Common myeloid progenitor, CD34-positive (primary cell): ENCODE measurements at regions of chr12 and their contacts with region 1.

Region 1: DNA sequence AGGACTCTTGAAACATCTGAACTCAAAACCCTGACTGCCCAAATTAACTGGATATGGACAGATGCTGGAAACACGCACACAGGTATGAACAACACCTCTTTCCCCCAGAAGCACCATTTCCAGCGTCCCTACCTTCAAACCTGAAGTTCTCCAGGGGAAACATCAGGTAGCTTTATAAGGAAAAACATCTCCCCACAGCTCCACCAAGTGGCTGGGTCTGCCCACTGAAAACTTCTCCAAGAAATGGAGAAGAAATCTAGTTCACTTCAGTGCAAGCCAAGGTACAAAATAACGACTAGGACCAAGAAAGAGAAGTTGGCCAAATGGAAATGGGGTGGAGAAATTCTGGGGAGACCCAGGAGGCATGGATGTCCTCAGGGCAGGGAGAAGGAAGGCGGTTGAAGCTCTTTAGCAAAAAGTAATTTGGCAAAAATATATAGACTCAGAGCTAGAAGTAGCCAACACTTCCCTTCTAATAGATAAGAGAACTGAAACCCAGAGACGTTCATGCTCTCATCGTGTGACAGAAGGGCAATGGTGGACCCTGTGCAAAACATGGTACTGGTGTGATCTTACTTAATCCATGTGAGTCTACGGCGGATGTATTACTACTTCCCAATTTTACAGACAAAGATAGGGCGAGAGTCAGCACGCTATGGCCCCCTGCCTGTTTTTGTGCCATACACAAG is 10.5 kb upstream of the NUAK1 start:
- DNase-seq: peak in 2 of 3 donors; percentile 22 to 36
- H3K4me3 ChIP-seq: no peak overlapping the region
- H3K27ac ChIP-seq: no peak overlapping the region
- H3K4me1 ChIP-seq: no peaks in the 10 kb centered on the region
- H3K27me3 ChIP-seq: peaks cover 0 to 36% (median 4%) of the 10 kb centered on the region in 5 experiments

Region 2: GRCh38 chr12:105420659-105421240 is 728.5 kb before region 1 on chr12:
- CTCF ChIA-PET with region 1: interaction called, 28 read pairs
- POLR2A ChIA-PET with region 1: no interaction called
- DNase-seq: peak; percentile 58 to 79 (median 71)
- H3K4me3 ChIP-seq: no peak overlapping the region
- H3K27ac ChIP-seq: no peak overlapping the region
- H3K4me1 ChIP-seq: no peaks in the 10 kb centered on the region
- H3K27me3 ChIP-seq: peaks cover 0 to 13% (median 3%) of the 10 kb centered on the region in 5 experiments

Region 3: DNA sequence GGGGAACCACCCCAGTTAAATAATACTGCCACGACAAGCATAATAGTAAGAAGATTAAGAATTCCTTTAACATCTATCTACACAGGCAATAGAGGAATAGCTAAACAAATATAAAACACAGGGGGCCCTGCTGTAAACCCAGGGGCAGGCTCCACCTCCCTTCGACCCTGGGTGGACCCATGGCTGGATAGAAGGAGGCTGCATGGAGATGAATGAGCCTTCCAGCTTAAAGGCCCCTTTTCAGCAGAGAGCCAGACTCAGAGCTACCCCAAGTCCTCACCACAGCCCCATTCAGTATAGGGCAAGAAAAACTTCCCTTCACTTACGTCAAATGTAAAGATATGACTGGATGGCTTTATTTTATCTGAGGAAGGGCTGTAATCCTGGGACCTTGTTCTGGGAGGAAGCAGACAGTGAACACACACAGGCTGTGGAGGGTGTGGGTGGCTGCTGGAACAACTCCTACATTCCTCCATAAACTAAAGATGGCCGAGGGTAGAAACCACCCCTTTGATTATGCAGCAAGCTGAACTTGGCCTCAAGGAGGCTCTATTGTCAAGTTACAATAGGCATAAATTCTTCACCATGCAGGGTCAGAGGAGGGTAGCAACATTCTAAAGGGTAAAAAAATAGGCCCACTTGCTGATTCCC is 40.9 kb before region 1 on chr12:
- CTCF ChIA-PET with region 1: no interaction called
- POLR2A ChIA-PET with region 1: no interaction called
- DNase-seq: no peak
- H3K4me3 ChIP-seq: no peak overlapping the region
- H3K27ac ChIP-seq: no peak overlapping the region
- H3K4me1 ChIP-seq: no peaks in the 10 kb centered on the region
- H3K27me3 ChIP-seq: peaks cover 7 to 46% (median 15%) of the 10 kb centered on the region in 5 experiments

Region 4: DNA sequence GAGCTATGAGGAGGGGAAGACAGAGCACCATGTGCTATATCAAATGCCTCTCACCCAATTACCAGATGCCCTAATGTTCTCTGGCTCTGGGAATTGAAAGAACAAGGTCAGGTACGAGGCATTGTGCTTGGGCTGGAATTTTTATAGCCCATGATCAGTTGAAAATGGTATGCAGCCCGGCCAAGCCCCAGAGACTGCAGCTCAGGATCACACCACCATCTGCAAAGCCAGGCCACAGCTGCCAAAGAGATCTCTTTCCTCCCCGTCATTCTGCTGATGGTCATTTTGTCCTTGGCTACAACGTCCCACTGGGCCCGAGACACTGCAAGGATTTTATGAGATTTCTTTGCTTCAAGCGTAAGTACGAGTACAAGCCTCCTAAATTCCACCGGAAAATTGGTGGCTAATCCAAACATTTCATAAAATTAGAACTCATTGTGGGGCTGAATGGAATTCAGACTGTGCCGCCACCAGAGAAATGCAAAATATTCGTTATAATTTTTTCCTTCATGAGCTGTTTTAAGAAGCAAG is 25.6 kb before region 1 on chr12:
- CTCF ChIA-PET with region 1: no interaction called
- POLR2A ChIA-PET with region 1: no interaction called
- DNase-seq: no peak
- H3K4me3 ChIP-seq: no peak overlapping the region
- H3K27ac ChIP-seq: no peak overlapping the region
- H3K4me1 ChIP-seq: no peaks in the 10 kb centered on the region
- H3K27me3 ChIP-seq: peaks cover 0 to 38% (median 6%) of the 10 kb centered on the region in 5 experiments

Region 5: GRCh38 chr12:106136263-106136662 is 13.0 kb before region 1 on chr12:
- CTCF ChIA-PET with region 1: interaction called, 39 read pairs
- POLR2A ChIA-PET with region 1: interaction called, 3 read pairs
- DNase-seq: peak; percentile 69 to 85 (median 81)
- H3K4me3 ChIP-seq: no peak overlapping the region
- H3K27ac ChIP-seq: no peak overlapping the region
- H3K4me1 ChIP-seq: peaks cover 0 to 20% (median 12%) of the 10 kb centered on the region in 4 experiments
- H3K27me3 ChIP-seq: peaks cover 5 to 85% (median 33%) of the 10 kb centered on the region in 5 experiments

Region 6: DNA sequence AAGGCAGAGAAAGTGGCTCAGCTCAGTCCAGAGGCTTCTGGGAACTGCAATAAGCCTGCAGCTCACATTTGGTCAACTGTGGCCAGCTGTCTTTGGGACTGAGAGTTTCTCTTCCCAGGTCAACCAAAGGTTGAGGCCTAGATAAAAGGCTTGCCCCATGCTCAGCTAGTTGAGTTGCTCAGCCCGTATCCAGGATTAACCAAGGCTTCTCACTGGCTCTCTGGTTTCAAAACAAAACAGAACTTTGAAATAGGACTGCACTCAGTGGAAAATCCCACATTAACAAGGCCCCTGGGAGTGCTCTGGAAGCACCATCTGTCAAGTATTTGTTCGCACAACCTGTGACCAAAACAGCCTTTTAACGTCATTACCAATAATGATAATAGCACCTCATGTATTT is 29.8 kb after region 1 on chr12:
- CTCF ChIA-PET with region 1: no interaction called
- POLR2A ChIA-PET with region 1: no interaction called
- DNase-seq: no peak
- H3K4me3 ChIP-seq: no peak overlapping the region
- H3K27ac ChIP-seq: no peak overlapping the region
- H3K4me1 ChIP-seq: no peaks in the 10 kb centered on the region
- H3K27me3 ChIP-seq: peaks cover 0 to 2% (median 2%) of the 10 kb centered on the region in 5 experiments